Activated naive CD8-positive, alpha-beta T cell treated with anti-CD3 and anti-CD28 coated beads, Interleukin-2, amount 10 ng/mL, durations not matched to agents 7 days and 5 days (primary cell): ENCODE measurements at regions of chr2 and their contacts with region 1.

Region 1: DNA sequence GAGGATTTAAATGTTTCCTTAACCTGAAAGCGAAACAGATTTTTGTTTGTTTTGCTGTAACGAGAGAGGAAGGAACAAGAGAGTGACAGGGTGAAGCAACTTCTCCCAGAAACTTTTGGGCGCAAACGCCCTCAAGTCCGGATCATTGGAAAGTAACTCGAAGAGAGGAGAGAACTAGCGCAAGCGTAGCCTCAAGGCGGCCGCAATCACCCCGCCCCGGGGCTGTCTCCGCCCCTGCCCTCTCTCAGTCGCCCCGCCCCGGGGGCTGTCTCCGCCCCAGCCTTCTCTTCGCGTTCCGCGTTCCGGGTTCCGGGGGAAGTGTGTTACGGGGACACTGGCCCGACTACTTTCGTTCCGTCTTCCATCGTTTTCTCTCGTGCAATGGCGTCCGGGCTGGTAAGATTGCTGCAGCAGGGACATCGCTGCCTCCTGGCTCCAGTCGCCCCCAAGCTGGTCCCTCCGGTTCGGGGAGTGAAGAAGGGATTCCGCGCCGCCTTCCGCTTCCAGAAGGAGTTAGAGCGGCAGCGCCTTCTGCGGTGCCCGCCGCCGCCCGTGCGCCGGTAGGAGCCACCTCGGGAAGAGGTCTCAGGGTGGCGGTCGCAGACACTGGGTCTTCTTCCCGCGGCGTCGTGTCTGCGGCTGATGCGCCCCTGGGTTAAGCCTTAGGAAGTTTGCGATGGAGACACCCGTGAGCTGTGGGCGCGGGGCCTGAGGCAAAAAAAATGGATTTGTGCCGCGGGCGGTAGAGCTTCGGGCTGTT is at the start of gene MRPL44:
- DNase-seq: peak; percentile 98
- ATAC-seq: peak; percentile 98
- H3K4me3 Mint-ChIP-seq: peak within 1 kb of the TSS; percentile 89
- H3K27ac Mint-ChIP-seq: peak within 1 kb of the TSS; percentile 91
- H3K4me1 Mint-ChIP-seq: peaks cover 53% of the 10 kb centered on the region
- H3K27me3 Mint-ChIP-seq: no peaks in the 10 kb centered on the region
- total RNA-seq, gene MRPL44: 28.3 to 29.0 TPM

Region 2: DNA sequence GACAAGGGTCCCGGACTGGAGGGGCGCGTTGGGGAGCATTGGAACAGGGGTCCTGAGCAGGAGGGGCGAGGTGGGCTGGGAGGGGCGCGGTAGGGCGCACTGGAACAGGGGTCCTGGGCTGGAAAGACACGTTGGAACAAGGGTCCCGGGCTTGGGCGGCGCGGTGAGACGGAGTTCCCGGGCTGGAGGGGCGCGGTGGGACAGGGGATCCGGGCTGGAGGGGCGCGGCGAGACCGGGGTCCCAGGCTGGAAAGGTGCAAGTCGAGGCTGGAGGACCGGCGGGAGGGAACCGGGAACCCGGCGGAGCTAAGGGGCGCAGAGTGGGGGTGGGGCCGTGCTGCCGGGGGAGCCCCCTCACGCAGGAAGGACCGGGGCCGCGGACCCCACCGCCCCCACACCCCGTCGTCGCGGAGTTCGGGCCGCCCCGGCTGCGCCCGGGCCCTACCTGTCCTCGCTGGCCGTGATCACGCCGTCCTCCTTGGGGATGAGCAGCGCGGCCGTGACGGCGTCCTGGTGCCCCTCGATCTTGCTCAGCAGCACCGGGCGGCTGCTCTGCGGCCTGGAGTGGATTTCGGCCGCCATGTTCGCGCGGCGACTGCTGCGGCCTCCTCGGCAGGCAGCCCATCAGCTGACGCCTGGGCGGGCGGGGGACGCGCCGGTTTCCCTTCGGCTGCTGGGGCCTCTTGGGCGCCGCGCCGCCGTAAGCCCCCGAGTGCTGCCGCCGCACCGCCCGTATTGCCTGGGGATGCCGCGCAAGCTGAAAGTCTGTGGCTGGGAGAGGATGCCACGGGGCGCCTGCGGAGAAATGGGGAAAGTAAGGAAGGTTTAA is 12.4 kb before region 1 on chr2 and contains the start of gene WDFY1:
- POLR2A ChIA-PET with region 1: interaction called, 35 read pairs
- DNase-seq: peak; percentile 88
- ATAC-seq: peak; percentile 85
- H3K4me3 Mint-ChIP-seq: peak within 1 kb of the TSS; percentile 94
- H3K27ac Mint-ChIP-seq: peak within 1 kb of the TSS; percentile 96
- H3K4me1 Mint-ChIP-seq: peaks cover 41% of the 10 kb centered on the region
- H3K27me3 Mint-ChIP-seq: no peaks in the 10 kb centered on the region
- total RNA-seq, gene WDFY1: 58.8 to 59.1 TPM